ENCODE measurements at regions of chr3 and their contacts with region 1.

Region 1: DNA sequence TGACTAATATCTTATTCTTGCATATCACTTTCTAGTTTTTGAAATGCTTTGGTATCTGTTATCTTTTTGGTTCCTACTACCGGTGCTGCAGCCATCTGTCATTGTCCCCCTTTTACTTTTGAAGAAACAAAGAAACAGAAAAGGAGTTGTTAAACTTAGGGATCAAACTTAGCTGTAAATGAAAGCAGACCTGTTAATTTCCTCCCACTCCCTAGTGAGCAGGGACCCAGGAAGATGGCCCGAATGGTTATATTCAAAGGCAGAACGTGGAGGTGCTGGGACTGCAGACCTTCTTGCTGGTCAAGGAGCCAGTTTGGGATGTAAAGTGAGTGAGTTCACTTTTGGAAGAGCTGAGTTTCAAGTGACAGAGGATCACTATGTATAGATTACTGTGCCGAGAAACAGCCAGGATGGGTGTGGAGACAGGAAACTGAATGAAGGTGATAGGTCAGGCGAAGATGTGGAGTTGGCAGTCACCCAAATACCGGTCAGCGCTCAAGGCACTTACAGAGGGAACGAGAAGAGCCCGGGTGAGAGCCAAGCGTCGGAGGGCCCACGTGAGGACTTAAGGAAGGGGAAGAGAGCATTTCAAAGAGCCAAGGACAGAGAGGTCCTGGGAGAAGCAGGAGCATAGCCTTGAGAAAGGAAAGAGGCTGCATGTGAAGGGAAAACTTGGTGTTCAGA is 20.1 kb downstream of the KBTBD8 start:
- DNase-seq: peak; percentile 58
- H3K4me3 ChIP-seq: peak overlapping the region; percentile 54
- H3K27ac ChIP-seq: peak overlapping the region; percentile 94
- H3K4me1 ChIP-seq: peaks cover 67% of the 10 kb centered on the region
- CTCF ChIP-seq: no peak

Region 2: GRCh38 chr3:66989860-66990665 is 28.2 kb before region 1 on chr3:
- CTCF ChIA-PET with region 1: interaction called, 4 read pairs
- POLR2A ChIA-PET with region 1: interaction called, 12 read pairs
- intact Hi-C with region 1: no loop called
- DNase-seq: peak; percentile 71
- H3K4me3 ChIP-seq: peak overlapping the region; percentile 61
- H3K27ac ChIP-seq: peak overlapping the region; percentile 52
- H3K4me1 ChIP-seq: peaks cover 10% of the 10 kb centered on the region
- CTCF ChIP-seq: peak; percentile 88

Region 3: DNA sequence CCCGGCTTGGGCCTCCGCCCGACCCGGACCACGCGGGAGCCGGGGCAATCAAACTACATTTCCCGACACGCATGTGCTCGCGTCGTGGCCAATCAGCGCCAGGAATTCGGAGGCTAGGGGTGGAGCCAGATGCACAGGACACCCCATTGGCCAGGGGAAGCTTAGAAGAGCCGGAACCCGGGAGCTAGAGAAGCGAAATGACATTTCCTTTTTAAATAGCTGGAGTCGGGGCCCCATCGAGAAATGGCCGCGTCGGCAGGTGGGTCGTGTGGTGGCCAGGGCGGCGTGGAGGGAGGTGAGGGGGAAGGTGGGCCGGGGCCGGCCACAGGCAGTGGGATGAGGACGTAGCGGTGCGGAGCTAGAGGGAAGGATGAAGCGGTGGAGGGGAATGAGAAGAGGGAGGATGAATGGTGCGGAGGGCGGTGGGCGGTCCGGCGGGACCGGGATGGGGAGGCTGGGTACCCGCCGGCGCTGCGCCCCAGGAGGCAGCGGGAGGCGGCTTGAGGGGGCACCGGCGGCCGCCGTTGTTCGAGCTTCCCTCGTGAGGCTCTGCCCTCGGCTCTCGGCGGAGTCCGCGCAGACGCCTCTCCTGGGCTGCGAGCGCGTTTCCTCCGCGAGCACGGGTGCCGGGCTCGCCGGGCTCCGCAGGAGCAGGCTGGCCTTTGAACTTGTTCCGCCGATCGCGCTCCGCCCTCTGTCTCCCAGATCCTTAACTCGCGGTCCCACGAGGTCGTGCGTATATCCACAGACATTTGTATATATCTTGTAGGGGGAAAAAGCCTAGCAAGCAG is 19.9 kb before region 1 on chr3 and contains the start of gene KBTBD8:
- CTCF ChIA-PET with region 1: interaction called, 4 read pairs
- POLR2A ChIA-PET with region 1: interaction called, 38 read pairs
- intact Hi-C with region 1: loop called (anchors 1 kb)
- DNase-seq: peak; percentile 99
- H3K4me3 ChIP-seq: peak within 1 kb of the TSS; percentile 92
- H3K27ac ChIP-seq: peak within 1 kb of the TSS; percentile 18
- H3K4me1 ChIP-seq: peaks cover 44% of the 10 kb centered on the region
- CTCF ChIP-seq: no peak
- total RNA-seq, gene KBTBD8: 16.4 and 18.4 TPM in 2 replicates

Region 4: DNA sequence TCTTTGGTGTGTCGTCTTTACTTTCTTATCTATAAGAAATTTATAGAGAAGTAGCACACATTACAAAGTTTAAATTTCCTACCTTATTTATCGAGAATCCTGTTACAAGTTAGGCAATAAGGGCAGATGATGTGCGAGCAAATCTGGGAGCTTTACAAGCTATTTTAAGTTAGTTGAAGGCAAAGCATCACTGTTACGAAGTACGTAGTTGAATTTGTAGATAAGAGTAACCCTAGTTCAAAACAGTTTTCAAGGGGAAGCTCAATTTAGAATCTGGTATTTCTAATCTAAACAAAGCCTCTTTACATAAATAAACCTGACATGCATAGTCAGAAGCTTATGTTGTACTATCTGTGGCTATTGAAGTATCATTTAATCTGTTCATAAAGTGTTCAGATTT is 11.8 kb before region 1 on chr3:
- CTCF ChIA-PET with region 1: interaction called, 3 read pairs
- POLR2A ChIA-PET with region 1: interaction called, 35 read pairs
- intact Hi-C with region 1: no loop called
- DNase-seq: no peak
- H3K4me3 ChIP-seq: peak overlapping the region; percentile 4
- H3K27ac ChIP-seq: no peak overlapping the region
- H3K4me1 ChIP-seq: peaks cover 52% of the 10 kb centered on the region
- CTCF ChIP-seq: no peak

Measured in OCI-LY7 (cell line).